AG04450 (cell line): ENCODE measurements at regions of chr4 and their contacts with region 1.

Region 1: DNA sequence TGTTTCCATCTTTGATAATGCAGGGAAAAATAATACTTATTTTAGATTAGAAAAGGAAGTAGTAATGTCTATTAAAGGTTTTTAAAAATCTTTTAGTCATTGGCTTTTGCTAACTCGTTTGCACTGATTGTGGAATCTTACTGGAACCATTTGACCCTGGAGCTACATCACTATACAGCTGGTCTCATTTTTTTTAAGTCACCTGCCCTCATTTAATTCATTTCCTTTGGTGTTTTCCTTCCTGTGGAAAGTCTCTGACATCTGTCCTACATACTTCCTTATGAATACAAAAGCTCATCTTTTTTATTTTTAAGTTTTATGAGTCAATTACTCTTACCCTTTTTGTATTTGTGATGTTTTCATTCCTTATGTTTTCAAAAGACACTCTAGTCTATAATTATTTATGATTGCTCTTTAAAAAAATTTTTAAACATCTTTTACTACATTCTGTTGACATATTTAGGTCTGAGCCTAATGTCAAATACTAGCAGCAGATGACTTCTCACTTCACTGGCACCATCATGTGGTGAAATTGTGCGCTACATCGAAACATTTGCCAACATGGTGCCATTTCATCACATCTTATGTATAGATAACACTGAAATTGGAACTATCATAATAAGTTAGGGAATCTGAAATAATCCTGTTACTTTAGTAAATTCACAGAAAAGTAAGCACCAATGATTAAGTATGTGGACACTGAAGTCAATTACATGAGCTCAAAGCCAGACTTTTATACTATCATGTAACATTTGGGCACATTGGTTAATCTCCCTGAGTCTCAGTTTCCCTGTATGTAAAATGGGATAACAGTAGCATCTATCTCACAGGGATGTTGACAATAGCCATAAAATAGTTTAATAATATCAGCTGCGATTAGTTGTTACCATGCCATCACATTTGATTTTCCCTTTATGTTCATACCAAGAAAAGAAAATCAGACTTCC is 9.4 kb upstream of the MMAA start:
- DNase-seq: no peak
- H3K4me3 ChIP-seq: no peak overlapping the region
- H3K27ac ChIP-seq: no peak overlapping the region
- H3K27me3 ChIP-seq: no peaks in the 10 kb centered on the region
- CTCF ChIP-seq: peak; percentile 86

Region 2: DNA sequence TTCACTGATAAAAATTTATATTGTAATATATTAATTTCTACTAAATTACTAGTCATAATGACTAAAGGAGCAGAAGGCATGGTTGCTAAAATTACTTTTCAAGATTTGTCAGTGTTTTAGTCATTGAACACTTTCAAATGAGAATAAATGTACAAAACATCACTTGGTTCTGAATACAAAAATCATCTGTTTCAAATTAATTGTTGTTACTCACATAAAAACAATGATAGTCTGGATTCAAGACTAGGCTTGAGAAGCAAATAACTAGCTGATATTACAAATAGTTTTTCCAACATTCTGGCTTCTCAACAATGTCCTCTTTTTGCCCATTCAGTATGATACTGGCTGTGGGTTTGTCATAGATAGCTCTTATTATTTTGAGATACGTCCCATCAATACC is 624.2 kb before region 1 on chr4:
- CTCF ChIA-PET with region 1: no interaction called
- POLR2A ChIA-PET with region 1: no interaction called
- DNase-seq: no peak
- H3K4me3 ChIP-seq: no peak overlapping the region
- H3K27ac ChIP-seq: no peak overlapping the region
- H3K27me3 ChIP-seq: no peaks in the 10 kb centered on the region
- CTCF ChIP-seq: no peak

Region 3: GRCh38 chr4:145180298-145181090 is 429.3 kb before region 1 on chr4 and contains the start of gene OTUD4:
- CTCF ChIA-PET with region 1: interaction called, 11 read pairs
- POLR2A ChIA-PET with region 1: no interaction called
- DNase-seq: peak; percentile 81
- H3K4me3 ChIP-seq: peak within 1 kb of the TSS; percentile 86
- H3K27ac ChIP-seq: peak within 1 kb of the TSS; percentile 86
- H3K27me3 ChIP-seq: peaks cover 3% of the 10 kb centered on the region
- CTCF ChIP-seq: peak; percentile 23; the same call in 1 of the 2 replicates
- polyA plus RNA-seq, gene OTUD4: 19.7 and 27.1 TPM in 2 replicates

Region 4: DNA sequence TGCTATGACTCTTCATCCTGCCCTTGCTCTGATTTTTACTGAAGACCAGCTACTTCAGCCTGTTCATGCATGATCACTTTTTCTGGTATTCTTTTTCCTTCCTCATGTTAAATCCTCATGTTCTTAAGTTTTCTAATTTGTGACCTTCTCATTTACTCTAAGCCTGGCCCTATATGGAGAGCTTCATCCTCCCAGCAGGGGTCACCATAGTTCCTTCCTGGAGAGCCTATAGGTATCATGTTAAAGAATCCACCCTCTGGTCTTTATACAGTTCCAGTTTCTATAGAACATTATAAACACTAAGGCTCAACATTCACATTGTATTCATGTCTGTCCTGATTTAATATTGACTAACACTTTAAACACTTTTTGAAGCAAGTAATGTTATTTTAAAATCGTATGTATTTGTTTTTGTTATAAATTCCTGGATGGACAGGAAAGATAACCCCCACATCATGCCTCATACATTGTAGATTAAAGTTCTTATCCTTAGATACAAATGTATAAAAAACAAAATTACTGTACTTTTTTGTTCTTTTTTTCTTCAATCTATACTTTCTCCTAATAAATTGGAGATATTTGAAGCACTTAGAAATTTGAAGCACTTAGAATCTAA is 375.6 kb before region 1 on chr4:
- CTCF ChIA-PET with region 1: interaction called, 58 read pairs
- POLR2A ChIA-PET with region 1: no interaction called
- DNase-seq: peak; percentile 34
- H3K4me3 ChIP-seq: no peak overlapping the region
- H3K27ac ChIP-seq: no peak overlapping the region
- H3K27me3 ChIP-seq: no peaks in the 10 kb centered on the region
- CTCF ChIP-seq: peak; percentile 95

Region 5: DNA sequence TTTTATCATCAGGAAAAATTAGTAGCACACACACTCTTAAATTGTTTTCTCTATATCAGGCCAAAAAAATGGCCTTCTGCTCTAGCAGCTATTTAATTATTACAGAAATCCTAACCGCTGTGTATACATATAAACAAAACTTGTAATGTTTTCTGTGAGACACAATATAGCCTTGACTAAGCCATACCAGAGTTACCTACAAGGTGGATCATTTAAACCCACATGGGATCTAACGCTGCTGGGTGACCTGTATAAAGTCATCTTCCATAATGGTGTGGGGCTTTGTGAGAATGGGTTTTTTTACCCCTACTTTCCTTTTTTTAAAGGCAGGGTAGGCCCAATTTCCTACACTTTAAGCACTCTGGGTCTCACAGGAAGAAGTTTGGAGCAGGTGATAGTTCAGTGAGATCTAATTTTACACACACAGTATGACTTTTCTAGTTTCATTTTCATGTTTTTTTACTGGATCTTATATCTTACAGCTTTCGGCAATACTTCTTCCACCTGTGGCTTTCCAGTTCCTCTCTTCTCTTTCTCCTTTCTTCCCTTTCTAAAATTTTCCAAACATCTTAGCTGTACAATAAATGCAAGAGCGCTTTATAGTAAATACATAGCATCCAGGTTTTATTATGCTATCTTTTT is 57.5 kb before region 1 on chr4:
- CTCF ChIA-PET with region 1: interaction called, 15 read pairs
- POLR2A ChIA-PET with region 1: no interaction called
- DNase-seq: no peak
- H3K4me3 ChIP-seq: no peak overlapping the region
- H3K27ac ChIP-seq: no peak overlapping the region
- H3K27me3 ChIP-seq: no peaks in the 10 kb centered on the region
- CTCF ChIP-seq: no peak

Region 6: DNA sequence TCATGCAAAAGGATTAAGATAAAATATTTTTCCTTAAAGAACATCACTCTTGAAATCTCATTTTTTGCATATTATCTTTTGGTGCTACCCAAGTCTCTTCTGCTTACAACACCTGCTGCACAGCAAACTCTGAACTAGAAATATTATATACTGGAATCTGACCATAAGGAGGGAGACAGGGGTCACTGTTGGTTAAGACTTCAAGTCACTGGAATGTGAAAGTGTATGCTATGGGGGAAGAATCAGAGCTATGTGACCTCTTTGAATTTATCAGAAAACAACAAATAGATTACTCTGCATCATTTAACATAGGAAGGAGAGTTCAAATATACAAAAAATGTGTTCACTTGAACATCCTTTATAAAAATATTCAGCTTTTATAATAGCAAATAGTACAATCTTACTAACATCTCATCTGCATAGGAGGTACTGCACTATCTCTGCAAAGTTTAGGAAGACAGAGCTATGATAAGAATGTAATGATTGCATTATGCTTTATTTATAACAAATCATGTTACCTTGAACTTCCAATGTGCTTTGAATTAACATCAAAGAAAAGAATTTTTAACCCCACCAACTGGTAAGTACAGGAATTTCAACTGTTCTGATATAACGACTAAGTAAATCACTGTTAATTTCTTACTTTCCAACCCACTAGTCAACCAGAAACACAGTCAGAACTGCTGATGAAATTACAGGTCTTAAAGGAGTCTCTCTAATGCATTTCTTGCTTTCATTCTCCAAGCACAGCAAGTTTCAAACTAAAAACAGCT is 259.1 kb after region 1 on chr4:
- CTCF ChIA-PET with region 1: no interaction called
- POLR2A ChIA-PET with region 1: no interaction called
- DNase-seq: no peak
- H3K4me3 ChIP-seq: no peak overlapping the region
- H3K27ac ChIP-seq: no peak overlapping the region
- H3K27me3 ChIP-seq: no peaks in the 10 kb centered on the region
- CTCF ChIP-seq: peak; percentile 29